Mammary epithelial cell (primary cell): ENCODE measurements at regions of chr1 and their contacts with region 1.

Region 1: DNA sequence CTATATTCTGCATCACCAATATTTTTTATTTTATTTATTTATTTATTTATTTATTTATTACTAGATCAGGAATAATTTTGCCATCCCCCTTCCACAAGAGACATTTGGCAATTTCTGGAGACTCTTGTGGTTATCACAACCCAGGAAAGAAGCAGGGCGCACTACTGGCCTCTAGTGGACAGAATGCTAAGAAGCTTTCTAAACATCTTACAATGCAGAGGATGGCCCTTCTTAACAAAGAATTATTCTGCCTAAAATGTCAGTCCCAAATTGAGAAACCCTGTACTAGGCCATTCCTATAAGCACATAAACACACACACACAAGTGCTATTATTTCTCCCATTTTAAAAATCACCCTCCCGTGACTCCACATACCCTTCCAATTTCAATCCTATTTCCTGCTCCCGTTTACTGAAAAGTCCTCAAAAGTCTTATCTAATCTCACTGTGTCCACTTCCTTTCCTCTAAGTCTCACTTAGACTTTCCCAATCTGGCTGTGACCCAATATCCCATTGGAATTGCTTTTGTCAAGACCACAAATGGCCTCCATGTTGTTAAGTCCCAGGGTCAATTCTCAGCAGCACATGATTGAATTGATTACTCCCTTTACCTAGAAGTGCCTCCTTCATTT is 43.7 kb upstream of the RNF11 start:
- DNase-seq: peak; percentile 42
- H3K4me3 ChIP-seq: no peak overlapping the region
- H3K27ac ChIP-seq: no peak overlapping the region
- H3K4me1 ChIP-seq: no peaks in the 10 kb centered on the region
- H3K27me3 ChIP-seq: no peaks in the 10 kb centered on the region
- CTCF ChIP-seq: peak; percentile 87 to 90

Region 2: GRCh38 chr1:50750021-50750619 is 442.2 kb before region 1 on chr1:
- CTCF ChIA-PET with region 1: no interaction called
- dilution Hi-C with region 1: no loop called
- in situ Hi-C with region 1: loop called in 1 of 2 experiments (anchors 25 kb)
- intact Hi-C with region 1: loop called (anchors 5 kb)
- DNase-seq: peak; percentile 24
- H3K4me3 ChIP-seq: no peak overlapping the region
- H3K27ac ChIP-seq: no peak overlapping the region
- H3K4me1 ChIP-seq: peaks cover 4% of the 10 kb centered on the region
- H3K27me3 ChIP-seq: no peaks in the 10 kb centered on the region
- CTCF ChIP-seq: peak; percentile 56 to 63

Region 3: GRCh38 chr1:50873458-50874187 is 318.7 kb before region 1 on chr1:
- CTCF ChIA-PET with region 1: interaction called, 6 read pairs
- dilution Hi-C with region 1: no loop called
- in situ Hi-C with region 1: no loop called
- intact Hi-C with region 1: loop called (anchors 5 kb)
- DNase-seq: peak; percentile 31
- H3K4me3 ChIP-seq: no peak overlapping the region
- H3K27ac ChIP-seq: no peak overlapping the region
- H3K4me1 ChIP-seq: no peaks in the 10 kb centered on the region
- H3K27me3 ChIP-seq: no peaks in the 10 kb centered on the region
- CTCF ChIP-seq: peak; percentile 42 to 58

Region 4: GRCh38 chr1:50968158-50968820 is 224.0 kb before region 1 on chr1:
- CTCF ChIA-PET with region 1: no interaction called
- dilution Hi-C with region 1: no loop called
- in situ Hi-C with region 1: no loop called
- intact Hi-C with region 1: loop called (anchors 1 kb)
- DNase-seq: peak; percentile 90
- H3K4me3 ChIP-seq: peak overlapping the region; percentile 89 to 92 (median 90)
- H3K27ac ChIP-seq: peak overlapping the region; percentile 74
- H3K4me1 ChIP-seq: peaks cover 9% of the 10 kb centered on the region
- H3K27me3 ChIP-seq: no peaks in the 10 kb centered on the region
- CTCF ChIP-seq: peak in 1 of 2 donors; percentile 46

Region 5: GRCh38 chr1:51235673-51236530 is 43.6 kb after region 1 on chr1 and contains the start of gene RNF11:
- CTCF ChIA-PET with region 1: no interaction called
- dilution Hi-C with region 1: no loop called
- in situ Hi-C with region 1: no loop called
- intact Hi-C with region 1: loop called (anchors 1 kb)
- DNase-seq: peak; percentile 91
- H3K4me3 ChIP-seq: peak within 1 kb of the TSS; percentile 79 to 97 (median 88)
- H3K27ac ChIP-seq: peak within 1 kb of the TSS; percentile 89
- H3K4me1 ChIP-seq: peaks cover 16% of the 10 kb centered on the region
- H3K27me3 ChIP-seq: no peaks in the 10 kb centered on the region
- CTCF ChIP-seq: no peak
- total RNA-seq, gene RNF11: 82.7 to 92.0 TPM

Region 6: DNA sequence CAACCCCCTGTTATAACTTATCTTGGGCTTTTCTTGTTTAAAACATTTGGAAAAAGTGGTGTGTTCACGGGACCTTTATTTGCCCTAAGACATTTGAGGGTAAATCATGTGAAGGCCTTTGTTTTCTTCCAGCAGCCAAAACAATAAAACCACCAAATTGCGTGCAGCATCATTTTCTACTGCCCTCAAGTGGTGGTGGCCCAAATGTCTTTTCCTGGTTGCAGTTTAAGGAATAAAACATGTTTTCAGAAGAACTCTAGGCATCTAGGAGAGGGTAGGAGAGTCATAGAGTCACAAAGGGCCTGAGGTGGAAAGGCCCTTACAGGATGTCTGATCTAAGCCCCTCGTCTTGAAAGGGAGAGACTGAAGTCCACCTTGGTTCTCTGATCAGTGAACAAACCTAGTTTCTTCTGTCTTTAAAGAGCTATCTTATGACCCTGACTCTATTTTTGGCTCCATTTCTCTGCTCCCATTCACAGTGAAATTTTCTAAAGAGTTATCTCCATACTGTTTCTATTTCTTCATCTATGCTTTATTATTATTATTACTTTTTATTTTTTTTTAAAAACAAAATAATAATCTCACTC is 342.8 kb after region 1 on chr1:
- CTCF ChIA-PET with region 1: no interaction called
- dilution Hi-C with region 1: no loop called
- in situ Hi-C with region 1: no loop called
- intact Hi-C with region 1: loop called (anchors 2 kb)
- DNase-seq: peak; percentile 45
- H3K4me3 ChIP-seq: no peak overlapping the region
- H3K27ac ChIP-seq: no peak overlapping the region
- H3K4me1 ChIP-seq: peaks cover 5% of the 10 kb centered on the region
- H3K27me3 ChIP-seq: no peaks in the 10 kb centered on the region
- CTCF ChIP-seq: peak; percentile 66 to 79